Activated CD4-positive, alpha-beta T cell treated with anti-CD3 and anti-CD28 coated beads for 36 hours (primary cell): ENCODE measurements at regions of chr10 and their contacts with region 1.

Region 1: DNA sequence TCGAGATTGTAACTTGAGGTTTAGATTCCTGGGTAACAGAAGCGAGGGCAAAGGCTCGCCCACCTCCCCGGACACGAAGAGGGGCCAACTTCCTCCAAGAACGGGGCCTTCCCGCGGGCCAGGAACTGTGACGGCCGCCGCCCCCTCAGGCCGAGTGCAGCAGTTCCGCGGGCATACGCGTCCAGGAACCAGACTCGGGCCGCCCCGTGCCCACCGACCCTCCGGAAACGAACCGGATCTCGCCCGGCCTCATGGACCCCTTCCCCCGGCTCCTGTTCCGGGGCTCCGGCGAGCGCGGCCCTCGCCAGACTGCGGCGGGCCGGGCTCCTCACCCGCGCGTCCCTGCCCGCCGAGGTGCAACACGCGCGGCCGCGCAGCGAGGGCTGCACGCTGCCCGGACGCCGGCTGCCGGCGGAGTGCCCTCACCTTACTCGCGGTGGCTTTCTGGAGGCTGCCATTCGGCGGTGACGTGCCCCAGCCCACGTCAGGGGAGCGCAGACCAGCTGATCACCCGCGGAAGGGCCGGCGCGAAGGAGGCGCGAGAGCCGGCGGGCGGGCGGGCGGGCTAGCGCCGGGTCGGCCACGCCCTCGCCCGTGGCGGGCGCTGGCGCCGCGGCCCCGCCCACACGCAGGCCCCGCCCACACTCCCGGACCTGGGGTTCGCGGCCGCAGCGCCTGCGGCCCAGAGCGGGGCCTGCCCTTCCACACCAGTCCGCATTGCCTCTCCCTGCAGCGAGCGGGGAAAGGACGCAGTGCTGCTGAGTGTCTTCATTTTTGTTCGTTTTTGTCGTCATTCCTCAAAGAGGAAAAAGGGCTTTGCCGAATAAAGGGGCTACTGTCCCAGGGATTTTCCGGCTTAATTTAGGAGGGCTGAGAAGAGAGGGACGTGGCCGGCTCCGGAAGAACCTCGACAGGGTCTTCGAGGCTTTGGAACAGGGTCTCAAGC is at the start of gene XPNPEP1:
- DNase-seq: peak; percentile 90
- ATAC-seq: peak; percentile 90
- H3K4me3 Mint-ChIP-seq: peak within 1 kb of the TSS; percentile 94
- H3K27ac Mint-ChIP-seq: peak within 1 kb of the TSS; percentile 94
- H3K4me1 Mint-ChIP-seq: peaks cover 48% of the 10 kb centered on the region
- H3K27me3 Mint-ChIP-seq: no peaks in the 10 kb centered on the region
- total RNA-seq, gene XPNPEP1: 85.4 to 91.2 TPM

Region 2: GRCh38 chr10:109891105-109891504 is 32.1 kb before region 1 on chr10:
- CTCF ChIA-PET with region 1: no interaction called
- POLR2A ChIA-PET with region 1: no interaction called
- intact Hi-C with region 1: no loop called
- DNase-seq: no peak
- ATAC-seq: no peak
- H3K4me3 Mint-ChIP-seq: no peak overlapping the region
- H3K27ac Mint-ChIP-seq: no peak overlapping the region
- H3K4me1 Mint-ChIP-seq: peaks cover 36% of the 10 kb centered on the region
- H3K27me3 Mint-ChIP-seq: no peaks in the 10 kb centered on the region

Region 3: DNA sequence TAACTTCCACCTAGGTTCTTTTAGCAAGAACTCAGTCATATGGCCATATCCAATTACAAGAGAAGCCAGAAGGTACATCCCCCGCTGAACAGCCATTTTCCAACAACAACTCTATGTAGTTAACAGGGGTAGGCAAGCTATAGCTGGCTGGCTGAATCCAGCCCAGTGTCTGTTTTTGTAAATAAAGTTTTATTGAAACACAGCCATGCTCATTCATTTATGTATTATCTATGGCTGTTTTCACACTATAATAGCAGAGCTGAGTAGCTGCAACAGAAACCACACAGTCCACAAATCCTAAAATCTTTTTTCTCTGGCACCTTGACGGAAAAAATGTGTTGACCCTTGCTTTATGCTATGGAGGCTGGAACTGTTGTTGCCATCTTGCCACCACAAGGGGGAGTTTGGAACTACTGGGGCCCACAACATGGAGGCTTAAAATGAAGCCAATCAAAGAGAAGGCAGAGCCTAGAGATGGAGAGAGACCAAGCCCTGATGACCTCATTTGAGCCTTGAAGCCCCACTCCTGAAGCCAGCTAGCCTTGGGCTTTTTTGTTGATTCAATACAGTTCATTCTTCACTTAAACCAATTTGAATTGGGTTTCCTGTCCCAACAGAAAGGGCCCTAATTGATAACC is 33.3 kb after region 1 on chr10:
- CTCF ChIA-PET with region 1: interaction called, 4 read pairs
- POLR2A ChIA-PET with region 1: no interaction called
- intact Hi-C with region 1: loop called in 1 of 2 experiments (anchors 1 kb)
- DNase-seq: peak; percentile 54
- ATAC-seq: peak; percentile 96
- H3K4me3 Mint-ChIP-seq: no peak overlapping the region
- H3K27ac Mint-ChIP-seq: no peak overlapping the region
- H3K4me1 Mint-ChIP-seq: peaks cover 2% of the 10 kb centered on the region
- H3K27me3 Mint-ChIP-seq: no peaks in the 10 kb centered on the region

Region 4: GRCh38 chr10:110076559-110077318 is 153.5 kb after region 1 on chr10:
- CTCF ChIA-PET with region 1: interaction called, 3 read pairs
- POLR2A ChIA-PET with region 1: no interaction called
- intact Hi-C with region 1: loop called in 1 of 2 experiments (anchors 5 kb)
- DNase-seq: no peak
- ATAC-seq: peak; percentile 45
- H3K4me3 Mint-ChIP-seq: peak overlapping the region; percentile 75
- H3K27ac Mint-ChIP-seq: peak overlapping the region; percentile 98
- H3K4me1 Mint-ChIP-seq: peaks cover 85% of the 10 kb centered on the region
- H3K27me3 Mint-ChIP-seq: no peaks in the 10 kb centered on the region

Region 5: GRCh38 chr10:110101464-110102144 is 178.4 kb after region 1 on chr10:
- CTCF ChIA-PET with region 1: no interaction called
- POLR2A ChIA-PET with region 1: no interaction called
- intact Hi-C with region 1: loop called in 1 of 2 experiments (anchors 5 kb)
- DNase-seq: peak; percentile 32
- ATAC-seq: peak; percentile 78
- H3K4me3 Mint-ChIP-seq: peak overlapping the region; percentile 2
- H3K27ac Mint-ChIP-seq: peak overlapping the region; percentile 84
- H3K4me1 Mint-ChIP-seq: peaks cover 71% of the 10 kb centered on the region
- H3K27me3 Mint-ChIP-seq: no peaks in the 10 kb centered on the region

Region 6: DNA sequence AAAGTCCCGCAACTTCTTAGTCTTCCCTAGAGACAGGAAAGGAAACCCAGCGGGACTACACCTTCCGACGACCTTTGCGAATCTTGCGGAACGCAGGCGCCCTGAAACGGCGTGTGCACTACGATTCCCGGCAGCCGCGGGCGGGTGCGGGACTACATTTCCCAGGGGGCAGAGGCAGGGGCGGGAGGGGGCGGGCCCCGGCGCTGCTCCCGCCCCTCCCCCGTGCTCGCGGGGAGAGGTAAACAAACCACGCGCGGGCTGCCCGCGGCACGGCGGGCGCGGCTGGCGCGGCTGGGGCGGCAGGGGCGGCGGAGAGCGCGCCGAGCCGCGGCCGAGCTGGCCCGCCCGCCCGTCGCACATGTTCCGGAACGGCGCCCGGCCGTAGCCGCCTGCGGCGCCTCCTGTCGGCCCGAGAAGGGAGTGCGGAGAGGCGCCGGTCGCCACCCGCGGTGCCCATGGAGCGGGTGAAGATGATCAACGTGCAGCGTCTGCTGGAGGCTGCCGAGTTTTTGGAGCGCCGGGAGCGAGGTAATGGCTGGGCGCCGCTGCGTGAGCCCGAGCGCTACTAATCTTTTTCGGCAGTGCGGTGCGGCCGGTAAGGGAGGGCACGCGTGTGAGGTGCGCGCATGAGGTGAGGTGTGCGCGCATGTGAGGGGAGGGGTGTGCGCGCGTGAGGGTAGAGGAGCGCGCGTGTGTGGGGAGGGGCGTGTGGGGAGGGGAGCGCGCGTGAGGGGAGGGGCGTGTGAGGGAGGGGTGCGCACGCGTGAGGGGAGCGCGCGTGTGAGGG is 302.7 kb after region 1 on chr10:
- CTCF ChIA-PET with region 1: no interaction called
- POLR2A ChIA-PET with region 1: no interaction called
- intact Hi-C with region 1: loop called (anchors 1 to 5 kb)
- DNase-seq: peak; percentile 94
- ATAC-seq: peak; percentile 48
- H3K4me3 Mint-ChIP-seq: peak overlapping the region; percentile 95
- H3K27ac Mint-ChIP-seq: peak overlapping the region; percentile 95
- H3K4me1 Mint-ChIP-seq: peaks cover 44% of the 10 kb centered on the region
- H3K27me3 Mint-ChIP-seq: no peaks in the 10 kb centered on the region

Region 7: DNA sequence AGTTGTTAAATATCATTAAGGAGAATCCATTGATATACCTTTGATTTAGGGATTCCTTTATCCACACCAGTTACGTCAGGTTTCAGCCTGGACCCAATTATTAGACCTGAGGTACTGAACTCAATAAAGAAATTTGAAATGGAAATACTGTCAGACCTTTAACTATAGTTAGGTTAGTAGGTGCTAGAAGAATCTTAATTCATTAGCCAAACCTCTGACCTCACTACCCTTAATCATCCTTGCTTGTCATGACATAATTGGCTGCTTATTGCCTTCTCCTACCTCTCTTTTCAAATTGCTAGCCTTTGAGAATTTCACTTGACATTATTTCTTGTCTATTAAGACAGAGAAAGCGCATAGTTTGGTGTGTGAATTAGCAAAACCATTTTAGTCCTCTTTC is 354.3 kb after region 1 on chr10:
- CTCF ChIA-PET with region 1: no interaction called
- POLR2A ChIA-PET with region 1: no interaction called
- intact Hi-C with region 1: no loop called
- DNase-seq: no peak
- ATAC-seq: no peak
- H3K4me3 Mint-ChIP-seq: no peak overlapping the region
- H3K27ac Mint-ChIP-seq: no peak overlapping the region
- H3K4me1 Mint-ChIP-seq: peaks cover 39% of the 10 kb centered on the region
- H3K27me3 Mint-ChIP-seq: no peaks in the 10 kb centered on the region

Region 8: DNA sequence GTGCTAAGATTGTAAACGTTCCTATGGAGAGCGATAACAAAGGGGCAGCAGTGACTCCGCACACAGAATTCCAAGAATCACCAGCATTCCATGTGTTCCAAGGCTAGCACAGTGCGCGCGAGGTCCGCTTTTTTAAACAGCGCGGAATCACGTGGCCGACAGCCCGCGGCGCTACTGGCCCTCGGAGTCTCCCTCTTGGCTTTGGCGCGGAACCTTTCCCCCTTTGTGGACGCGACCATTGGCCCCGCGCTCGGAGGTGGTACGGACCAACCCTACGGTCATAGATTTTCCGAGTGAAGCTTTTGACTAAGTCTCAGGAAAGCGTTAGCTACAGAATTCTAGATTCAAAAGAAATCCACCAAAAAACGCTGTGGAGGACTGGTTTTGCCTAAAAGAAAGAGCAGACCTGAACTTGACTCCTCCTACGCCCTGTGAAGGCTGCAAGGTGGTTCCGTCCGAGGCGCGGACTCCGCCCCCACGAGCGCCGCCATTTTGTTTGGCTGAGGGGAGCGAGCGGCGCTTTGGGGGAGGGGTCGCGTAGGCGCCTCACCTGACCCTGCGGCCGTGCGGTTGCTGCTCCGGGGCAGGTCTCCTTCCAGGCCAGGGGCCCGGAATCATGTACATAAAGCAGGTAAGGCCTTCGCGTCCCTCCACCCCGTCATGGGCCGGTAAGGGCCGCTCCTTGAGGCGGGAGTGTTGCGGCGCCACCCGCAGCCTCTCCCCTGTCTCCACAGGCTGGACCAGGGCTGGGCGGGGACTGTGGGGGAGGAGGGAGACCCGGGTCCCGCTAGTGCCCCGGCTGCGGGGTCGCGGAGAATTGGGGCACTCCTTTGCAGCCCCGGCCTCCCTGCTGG is 644.2 kb after region 1 on chr10 and contains the start of gene SMC3:
- CTCF ChIA-PET with region 1: no interaction called
- POLR2A ChIA-PET with region 1: no interaction called
- intact Hi-C with region 1: loop called in 1 of 2 experiments (anchors 5 kb)
- DNase-seq: peak; percentile 95
- ATAC-seq: peak; percentile 84
- H3K4me3 Mint-ChIP-seq: peak within 1 kb of the TSS; percentile 93
- H3K27ac Mint-ChIP-seq: peak within 1 kb of the TSS; percentile 99
- H3K4me1 Mint-ChIP-seq: peaks cover 35% of the 10 kb centered on the region
- H3K27me3 Mint-ChIP-seq: peaks cover 13% of the 10 kb centered on the region
- total RNA-seq, gene SMC3: 76.8 to 83.5 TPM